Mammary epithelial cell (primary cell): ENCODE measurements at regions of chr11 and their contacts with region 1.

Region 1: DNA sequence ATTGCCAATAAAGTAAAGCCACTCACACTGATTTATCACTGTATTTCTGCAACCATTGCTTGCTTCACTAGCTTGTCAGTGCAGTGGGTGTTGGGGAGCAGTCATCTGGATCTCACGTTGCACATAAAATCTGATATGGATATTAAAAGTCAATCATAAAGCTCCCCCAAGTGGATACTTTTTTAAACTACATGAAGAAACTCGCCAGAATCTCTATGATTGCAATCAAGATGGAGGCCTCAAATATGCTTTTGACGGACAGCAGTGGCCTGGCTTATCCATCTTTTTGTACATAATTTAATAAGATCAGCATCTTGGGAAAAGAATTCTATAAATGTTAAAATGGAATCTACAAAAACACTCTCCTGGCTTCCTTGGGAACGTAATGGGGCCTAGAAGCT is 137.7 kb downstream of the WT1 start:
- DNase-seq: peak; percentile 47
- H3K4me3 ChIP-seq: no peak overlapping the region
- H3K27ac ChIP-seq: no peak overlapping the region
- H3K4me1 ChIP-seq: peaks cover 2% of the 10 kb centered on the region
- H3K27me3 ChIP-seq: peaks cover 5% of the 10 kb centered on the region
- CTCF ChIP-seq: peak; percentile 26 to 38

Region 2: DNA sequence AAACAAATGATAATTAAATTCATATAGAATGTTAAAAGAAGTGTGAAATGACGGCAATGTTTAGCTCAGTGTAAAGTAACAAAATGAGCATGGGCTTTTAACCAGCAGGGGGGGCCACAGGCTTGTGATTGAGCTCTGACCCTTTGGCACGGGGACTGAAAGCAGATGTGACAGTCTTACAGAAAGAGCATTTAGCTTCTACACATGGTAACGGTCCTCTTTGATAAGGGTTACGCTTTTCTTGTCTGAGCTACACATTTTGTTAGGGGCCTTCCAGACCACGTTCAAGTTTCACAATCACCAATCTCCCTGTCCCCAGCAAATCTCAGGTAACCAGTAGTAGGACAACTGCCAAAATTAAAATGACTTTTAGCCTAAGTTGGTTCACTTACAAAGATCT is 1190.5 kb before region 1 on chr11:
- CTCF ChIA-PET with region 1: no interaction called
- dilution Hi-C with region 1: no loop called
- in situ Hi-C with region 1: no loop called
- intact Hi-C with region 1: loop called (anchors 2 kb)
- DNase-seq: peak; percentile 39
- H3K4me3 ChIP-seq: no peak overlapping the region
- H3K27ac ChIP-seq: no peak overlapping the region
- H3K4me1 ChIP-seq: no peaks in the 10 kb centered on the region
- H3K27me3 ChIP-seq: no peaks in the 10 kb centered on the region
- CTCF ChIP-seq: peak; percentile 77 to 85

Region 3: DNA sequence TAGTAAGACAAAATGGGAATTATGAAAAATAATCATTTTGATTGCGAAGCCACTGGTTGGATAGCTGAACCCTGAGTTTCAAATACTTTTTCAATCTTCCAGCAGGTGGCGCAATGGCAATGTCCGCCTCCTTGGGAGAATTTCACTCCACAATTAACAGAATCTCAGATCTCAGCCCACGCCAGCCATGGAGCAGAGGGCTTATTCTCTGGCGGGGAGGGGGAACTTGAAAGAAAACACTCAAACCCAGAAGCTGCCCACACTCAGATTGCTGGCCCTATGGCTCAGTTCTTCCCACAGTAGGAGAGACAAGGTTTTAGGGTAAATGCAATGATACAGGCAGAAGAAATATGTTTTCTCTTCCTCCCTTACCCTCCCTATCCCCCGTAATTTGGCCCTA is 245.4 kb before region 1 on chr11:
- CTCF ChIA-PET with region 1: no interaction called
- dilution Hi-C with region 1: no loop called
- in situ Hi-C with region 1: no loop called
- intact Hi-C with region 1: loop called (anchors 2 kb)
- DNase-seq: peak; percentile 25
- H3K4me3 ChIP-seq: no peak overlapping the region
- H3K27ac ChIP-seq: no peak overlapping the region
- H3K4me1 ChIP-seq: peaks cover 11% of the 10 kb centered on the region
- H3K27me3 ChIP-seq: no peaks in the 10 kb centered on the region
- CTCF ChIP-seq: peak; percentile 61 to 74

Region 4: GRCh38 chr11:32200136-32200847 is 97.3 kb before region 1 on chr11:
- CTCF ChIA-PET with region 1: no interaction called
- dilution Hi-C with region 1: loop called (anchors 5 kb)
- in situ Hi-C with region 1: no loop called
- intact Hi-C with region 1: no loop called
- DNase-seq: no peak
- H3K4me3 ChIP-seq: no peak overlapping the region
- H3K27ac ChIP-seq: no peak overlapping the region
- H3K4me1 ChIP-seq: no peaks in the 10 kb centered on the region
- H3K27me3 ChIP-seq: no peaks in the 10 kb centered on the region
- CTCF ChIP-seq: no peak